ENCODE measurements at regions of chr12 and their contacts with region 1.

Region 1: GRCh38 chr12:15532364-15532977 is 210.2 kb downstream of the PTPRO start:
- DNase-seq: peak; percentile 66
- ATAC-seq: peak; percentile 76
- H3K4me3 Mint-ChIP-seq: no peak overlapping the region
- H3K27ac Mint-ChIP-seq: no peak overlapping the region
- H3K4me1 Mint-ChIP-seq: no peaks in the 10 kb centered on the region
- H3K27me3 Mint-ChIP-seq: no peaks in the 10 kb centered on the region

Region 2: DNA sequence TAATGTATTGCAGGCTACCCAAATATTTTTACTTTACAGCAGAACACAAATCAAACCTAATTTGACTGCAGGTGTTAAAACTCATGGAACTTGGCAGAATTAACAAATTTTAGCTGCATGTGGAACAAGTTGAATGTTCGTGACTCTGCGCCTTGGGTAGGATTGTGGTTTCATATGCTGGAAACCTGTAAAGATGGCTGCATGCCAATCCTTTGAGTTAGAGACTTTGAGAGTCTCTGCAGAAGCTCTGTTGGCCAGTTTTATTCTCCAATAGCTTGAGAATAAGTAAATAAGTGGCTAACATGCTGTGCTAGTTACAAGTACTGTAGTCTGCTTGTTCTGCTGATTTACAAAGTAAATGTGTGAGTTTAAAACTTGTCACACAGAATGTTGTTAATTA is 481.8 kb before region 1 on chr12:
- CTCF ChIA-PET with region 1: no interaction called
- POLR2A ChIA-PET with region 1: no interaction called
- intact Hi-C with region 1: no loop called
- DNase-seq: peak; percentile 50
- ATAC-seq: peak; percentile 49
- H3K4me3 Mint-ChIP-seq: no peak overlapping the region
- H3K27ac Mint-ChIP-seq: no peak overlapping the region
- H3K4me1 Mint-ChIP-seq: peaks cover 19% of the 10 kb centered on the region
- H3K27me3 Mint-ChIP-seq: no peaks in the 10 kb centered on the region

Region 3: DNA sequence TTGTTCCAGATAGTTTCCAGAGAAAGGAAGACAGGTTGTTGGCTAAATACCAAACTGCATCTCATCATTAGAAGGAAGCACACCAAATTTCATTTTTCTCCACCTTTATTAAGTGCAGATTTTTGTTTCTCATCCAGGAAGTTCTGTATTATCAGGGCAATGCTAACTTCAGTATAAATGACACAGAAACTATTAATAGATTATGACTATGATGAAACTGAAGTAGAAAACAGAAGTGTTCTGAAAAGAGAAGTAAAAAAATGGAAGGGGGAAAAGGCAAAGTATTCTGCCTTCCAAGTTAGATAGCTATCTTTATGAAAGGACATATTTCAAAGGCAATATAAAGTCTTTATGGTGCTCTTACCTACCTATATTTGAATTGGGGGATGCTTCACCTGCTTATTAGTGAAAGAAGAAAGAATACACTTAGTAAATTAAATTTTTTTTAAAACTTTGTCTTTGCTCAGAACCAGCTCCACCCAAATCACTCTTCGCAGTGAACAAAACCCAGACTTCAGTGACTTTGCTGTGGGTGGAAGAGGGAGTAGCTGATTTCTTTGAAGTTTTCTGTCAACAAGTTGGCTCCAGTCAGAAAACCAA is 13.7 kb after region 1 on chr12:
- CTCF ChIA-PET with region 1: interaction called, 32 read pairs
- POLR2A ChIA-PET with region 1: no interaction called
- intact Hi-C with region 1: no loop called
- DNase-seq: peak; percentile 32
- ATAC-seq: peak; percentile 78
- H3K4me3 Mint-ChIP-seq: no peak overlapping the region
- H3K27ac Mint-ChIP-seq: peak overlapping the region; percentile 78
- H3K4me1 Mint-ChIP-seq: peaks cover 62% of the 10 kb centered on the region
- H3K27me3 Mint-ChIP-seq: no peaks in the 10 kb centered on the region

Region 4: GRCh38 chr12:15575671-15576541 is 43.4 kb after region 1 on chr12:
- CTCF ChIA-PET with region 1: interaction called, 345 read pairs
- POLR2A ChIA-PET with region 1: interaction called, 3 read pairs
- intact Hi-C with region 1: loop called (anchors 1 kb)
- DNase-seq: no peak
- ATAC-seq: peak; percentile 18
- H3K4me3 Mint-ChIP-seq: no peak overlapping the region
- H3K27ac Mint-ChIP-seq: peak overlapping the region; percentile 42
- H3K4me1 Mint-ChIP-seq: peaks cover 62% of the 10 kb centered on the region
- H3K27me3 Mint-ChIP-seq: peaks cover 2% of the 10 kb centered on the region

Region 5: GRCh38 chr12:15856097-15856982 is 323.9 kb after region 1 on chr12:
- CTCF ChIA-PET with region 1: interaction called, 35 read pairs
- POLR2A ChIA-PET with region 1: no interaction called
- intact Hi-C with region 1: loop called (anchors 1 kb)
- DNase-seq: peak; percentile 50
- ATAC-seq: no peak
- H3K4me3 Mint-ChIP-seq: no peak overlapping the region
- H3K27ac Mint-ChIP-seq: no peak overlapping the region
- H3K4me1 Mint-ChIP-seq: no peaks in the 10 kb centered on the region
- H3K27me3 Mint-ChIP-seq: peaks cover 3% of the 10 kb centered on the region